ENCODE measurements at regions of chr3 and their contacts with region 1.

Region 1: GRCh38 chr3:187319699-187320302 is 28.3 kb upstream of the MASP1 start:
- DNase-seq: peak; percentile 53
- H3K4me3 ChIP-seq: no peak overlapping the region
- H3K27ac ChIP-seq: no peak overlapping the region
- H3K4me1 ChIP-seq: peaks cover 8% of the 10 kb centered on the region
- H3K27me3 ChIP-seq: peaks cover 0 to 3% of the 10 kb centered on the region in 2 experiments
- CTCF ChIP-seq: peak; percentile 60 to 67
- POLR2A ChIP-seq: no peak

Region 2: DNA sequence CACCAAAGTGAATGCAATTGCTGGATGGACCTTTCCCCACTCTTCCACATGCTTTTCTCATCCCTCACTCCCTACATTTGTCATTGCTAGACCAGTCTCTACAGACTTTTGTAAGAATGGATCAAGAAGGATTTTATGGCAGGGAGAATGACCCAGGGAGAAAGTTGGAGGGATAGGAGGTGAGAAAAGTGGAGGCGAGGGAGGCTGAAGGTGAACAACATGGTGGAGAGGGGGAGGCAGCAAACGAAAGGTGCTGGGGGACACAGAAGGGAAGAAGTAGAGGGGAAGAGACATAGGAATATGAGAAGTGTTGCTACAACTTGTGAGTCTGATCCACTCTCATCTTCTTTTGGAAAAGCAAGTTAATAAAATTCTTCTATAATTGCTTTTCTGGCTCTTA is 146.9 kb before region 1 on chr3:
- CTCF ChIA-PET with region 1: no interaction called
- POLR2A ChIA-PET with region 1: no interaction called
- dilution Hi-C with region 1: no loop called
- intact Hi-C with region 1: no loop called
- DNase-seq: no peak
- H3K4me3 ChIP-seq: no peak overlapping the region
- H3K27ac ChIP-seq: no peak overlapping the region
- H3K4me1 ChIP-seq: no peaks in the 10 kb centered on the region
- H3K27me3 ChIP-seq: peaks cover 4 to 12% of the 10 kb centered on the region in 2 experiments
- CTCF ChIP-seq: no peak
- POLR2A ChIP-seq: no peak

Region 3: GRCh38 chr3:187186801-187187421 is 132.9 kb before region 1 on chr3:
- CTCF ChIA-PET with region 1: no interaction called
- POLR2A ChIA-PET with region 1: no interaction called
- dilution Hi-C with region 1: no loop called
- intact Hi-C with region 1: no loop called
- DNase-seq: no peak
- H3K4me3 ChIP-seq: no peak overlapping the region
- H3K27ac ChIP-seq: no peak overlapping the region
- H3K4me1 ChIP-seq: no peaks in the 10 kb centered on the region
- H3K27me3 ChIP-seq: peaks cover 0 to 4% of the 10 kb centered on the region in 2 experiments
- CTCF ChIP-seq: no peak
- POLR2A ChIP-seq: no peak

Region 4: GRCh38 chr3:187223799-187224198 is 96.0 kb before region 1 on chr3:
- CTCF ChIA-PET with region 1: interaction called, 69 read pairs
- POLR2A ChIA-PET with region 1: no interaction called
- dilution Hi-C with region 1: no loop called
- intact Hi-C with region 1: loop called (anchors 1 kb)
- DNase-seq: no peak
- H3K4me3 ChIP-seq: no peak overlapping the region
- H3K27ac ChIP-seq: no peak overlapping the region
- H3K4me1 ChIP-seq: no peaks in the 10 kb centered on the region
- H3K27me3 ChIP-seq: no peaks in the 10 kb centered on the region
- CTCF ChIP-seq: no peak
- POLR2A ChIP-seq: no peak

Region 5: GRCh38 chr3:187305881-187306280 is 13.9 kb before region 1 on chr3:
- CTCF ChIA-PET with region 1: interaction called, 15 read pairs
- POLR2A ChIA-PET with region 1: interaction called, 4 read pairs
- dilution Hi-C with region 1: no loop called
- intact Hi-C with region 1: no loop called
- DNase-seq: no peak
- H3K4me3 ChIP-seq: no peak overlapping the region
- H3K27ac ChIP-seq: no peak overlapping the region
- H3K4me1 ChIP-seq: no peaks in the 10 kb centered on the region
- H3K27me3 ChIP-seq: peaks cover 0 to 2% of the 10 kb centered on the region in 2 experiments
- CTCF ChIP-seq: no peak
- POLR2A ChIP-seq: no peak

Region 6: DNA sequence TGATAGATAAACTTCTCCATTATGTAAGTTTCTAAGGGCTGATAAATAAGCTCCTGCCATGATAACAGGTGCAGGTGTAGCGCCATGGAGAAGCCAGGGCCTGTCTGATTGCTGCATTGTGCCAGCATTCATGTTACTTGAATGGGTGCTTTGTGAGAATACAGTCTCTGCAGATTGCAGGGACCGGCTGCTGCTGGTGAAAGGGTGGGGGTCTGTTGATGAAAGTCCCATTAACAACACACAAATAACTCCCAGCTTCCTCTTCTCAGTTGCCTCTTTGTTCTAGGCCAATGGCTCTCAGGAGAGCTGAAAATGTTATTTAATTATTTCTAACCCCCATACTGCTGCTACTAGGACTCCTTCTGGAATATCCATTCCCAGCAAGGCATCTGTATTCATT is 125.6 kb after region 1 on chr3:
- CTCF ChIA-PET with region 1: no interaction called
- POLR2A ChIA-PET with region 1: no interaction called
- dilution Hi-C with region 1: no loop called
- intact Hi-C with region 1: no loop called
- DNase-seq: no peak
- H3K4me3 ChIP-seq: no peak overlapping the region
- H3K27ac ChIP-seq: no peak overlapping the region
- H3K4me1 ChIP-seq: no peaks in the 10 kb centered on the region
- H3K27me3 ChIP-seq: no peaks in the 10 kb centered on the region
- CTCF ChIP-seq: no peak
- POLR2A ChIP-seq: no peak

Region 7: DNA sequence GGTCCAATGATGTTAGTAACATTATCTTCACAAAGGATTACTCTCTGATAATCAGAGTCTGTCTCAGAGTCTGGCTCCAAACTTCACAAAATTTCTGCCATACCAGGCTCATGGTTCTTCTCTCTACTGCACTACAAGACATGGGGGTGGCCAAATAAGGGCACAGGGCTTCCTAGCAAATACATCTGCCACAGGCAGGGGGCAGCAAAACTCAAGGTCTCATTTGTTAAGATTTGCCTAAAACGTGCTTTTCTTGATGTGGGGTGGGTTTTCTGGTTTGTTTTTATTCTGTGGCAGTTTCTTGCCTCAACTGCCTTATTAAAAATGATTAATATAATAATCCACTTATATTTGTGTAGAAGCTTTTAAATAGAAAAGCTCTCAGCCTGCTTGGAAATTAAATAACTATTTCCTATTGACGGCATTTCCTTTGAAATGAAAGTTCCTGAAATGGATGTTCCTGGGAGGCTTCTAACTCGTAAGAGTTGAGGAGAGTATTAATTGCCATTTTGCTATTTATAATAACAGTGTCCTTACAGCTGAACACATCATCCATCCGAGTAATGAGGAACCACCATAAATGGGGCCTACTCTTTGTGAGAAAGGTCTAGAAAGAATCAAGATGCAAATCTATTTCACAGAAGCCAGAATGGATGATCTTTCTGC is 296.6 kb after region 1 on chr3:
- CTCF ChIA-PET with region 1: interaction called, 3 read pairs
- POLR2A ChIA-PET with region 1: no interaction called
- dilution Hi-C with region 1: no loop called
- intact Hi-C with region 1: loop called (anchors 1 kb)
- DNase-seq: peak; percentile 37
- H3K4me3 ChIP-seq: no peak overlapping the region
- H3K27ac ChIP-seq: no peak overlapping the region
- H3K4me1 ChIP-seq: no peaks in the 10 kb centered on the region
- H3K27me3 ChIP-seq: no peaks in the 10 kb centered on the region
- CTCF ChIP-seq: peak; percentile 64 to 74
- POLR2A ChIP-seq: no peak

Region 8: DNA sequence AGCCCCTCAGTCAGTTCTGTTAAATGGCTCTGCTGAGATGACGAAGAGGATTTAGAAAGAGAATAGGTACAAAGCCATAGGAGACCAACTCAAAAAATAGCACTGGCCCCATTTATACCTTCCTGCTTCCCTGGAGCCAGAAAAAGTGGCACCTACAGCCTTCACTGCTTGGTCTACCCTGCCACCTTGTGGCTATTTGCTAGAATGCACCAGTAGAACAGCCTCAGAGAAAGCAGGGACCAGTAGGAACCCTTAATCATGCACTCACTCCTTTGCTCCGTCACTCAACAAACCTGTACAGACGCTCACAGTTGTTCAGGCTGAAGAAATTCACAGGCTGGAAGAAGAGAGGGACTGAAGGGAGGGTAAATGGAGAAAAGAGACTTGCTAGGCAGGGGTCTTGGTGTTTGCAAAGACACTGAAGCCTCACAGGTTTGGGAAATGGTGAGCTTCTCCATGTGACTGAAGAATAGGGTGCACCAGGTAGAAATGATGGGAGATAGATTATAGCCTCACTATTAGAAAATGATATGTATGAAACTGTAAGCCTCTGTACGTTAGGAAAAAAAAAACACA is 394.7 kb after region 1 on chr3:
- CTCF ChIA-PET with region 1: interaction called, 111 read pairs
- POLR2A ChIA-PET with region 1: no interaction called
- dilution Hi-C with region 1: no loop called
- intact Hi-C with region 1: loop called (anchors 1 kb)
- DNase-seq: peak; percentile 71
- H3K4me3 ChIP-seq: no peak overlapping the region
- H3K27ac ChIP-seq: no peak overlapping the region
- H3K4me1 ChIP-seq: no peaks in the 10 kb centered on the region
- H3K27me3 ChIP-seq: no peaks in the 10 kb centered on the region
- CTCF ChIP-seq: peak; percentile 87 to 89
- POLR2A ChIP-seq: no peak

Measured in endothelial cell of umbilical vein (primary cell).